Natural killer cell (primary cell): ENCODE measurements at regions of chr19 and their contacts with region 1.

Region 1: GRCh38 chr19:28633319-28634018 is 579.5 kb downstream of the UQCRFS1 start:
- DNase-seq: peak; percentile 70 to 74
- ATAC-seq: peak; percentile 94 to 97 (median 96)
- H3K4me3 ChIP-seq: no peak overlapping the region
- H3K4me3 Mint-ChIP-seq: peak overlapping the region; percentile 47
- H3K27ac ChIP-seq: peak overlapping the region; percentile 40
- H3K27ac Mint-ChIP-seq: peak overlapping the region; percentile 39 to 86
- H3K4me1 ChIP-seq: peaks cover 23% of the 10 kb centered on the region
- H3K4me1 Mint-ChIP-seq: peaks cover 27 to 39% of the 10 kb centered on the region in 2 donors
- H3K27me3 ChIP-seq: no peaks in the 10 kb centered on the region
- H3K27me3 Mint-ChIP-seq: peaks cover 0 to 5% of the 10 kb centered on the region in 2 donors
- CTCF ChIP-seq: peak; percentile 98

Region 2: DNA sequence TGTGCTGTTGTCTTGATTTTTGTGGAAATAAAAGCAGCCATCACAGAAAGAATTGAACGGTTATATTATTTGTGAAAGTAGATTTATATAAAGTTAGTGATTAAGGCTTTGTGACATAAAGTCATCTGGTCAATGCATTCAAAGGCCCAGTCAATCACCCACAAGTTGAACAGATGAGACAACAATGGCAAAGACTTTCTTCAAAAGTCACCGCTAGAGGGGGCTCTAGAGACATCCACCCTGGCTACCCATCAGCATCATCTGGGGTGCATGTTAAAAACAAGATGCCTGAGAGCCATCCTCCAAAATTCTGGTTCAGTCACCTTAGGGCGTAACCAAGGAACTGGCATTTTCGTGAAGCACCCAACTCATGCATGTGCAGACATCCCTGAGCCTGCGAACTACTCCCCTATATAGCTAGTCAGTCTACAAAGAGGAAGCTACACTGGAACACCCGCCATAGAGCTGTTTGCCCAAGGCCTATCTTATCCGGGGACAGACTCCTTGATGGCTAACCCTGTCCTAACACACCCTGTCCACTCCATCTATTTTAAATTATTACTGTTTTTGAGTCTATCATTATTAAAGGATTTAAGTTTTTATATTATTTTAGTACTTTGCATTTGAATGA is 391.1 kb before region 1 on chr19:
- intact Hi-C with region 1: loop called (anchors 2 kb)
- DNase-seq: peak in 1 of 2 donors; percentile 45
- ATAC-seq: peak in 2 of 3 donors; percentile 36 to 74
- H3K4me3 ChIP-seq: no peak overlapping the region
- H3K4me3 Mint-ChIP-seq: no peak overlapping the region
- H3K27ac ChIP-seq: no peak overlapping the region
- H3K27ac Mint-ChIP-seq: no peak overlapping the region
- H3K4me1 ChIP-seq: no peaks in the 10 kb centered on the region
- H3K4me1 Mint-ChIP-seq: no peaks in the 10 kb centered on the region
- H3K27me3 ChIP-seq: no peaks in the 10 kb centered on the region
- H3K27me3 Mint-ChIP-seq: peaks cover 12 to 13% of the 10 kb centered on the region in 2 donors
- CTCF ChIP-seq: peak; percentile 73

Region 3: GRCh38 chr19:28466107-28467045 is 167.1 kb before region 1 on chr19:
- intact Hi-C with region 1: loop called (anchors 1 kb)
- DNase-seq: peak; percentile 78 to 79
- ATAC-seq: peak; percentile 37 to 60 (median 58)
- H3K4me3 ChIP-seq: no peak overlapping the region
- H3K4me3 Mint-ChIP-seq: no peak overlapping the region
- H3K27ac ChIP-seq: no peak overlapping the region
- H3K27ac Mint-ChIP-seq: peak overlapping the region in 1 of 2 donors; percentile 50
- H3K4me1 ChIP-seq: peaks cover 47% of the 10 kb centered on the region
- H3K4me1 Mint-ChIP-seq: peaks cover 53 to 63% of the 10 kb centered on the region in 2 donors
- H3K27me3 ChIP-seq: no peaks in the 10 kb centered on the region
- H3K27me3 Mint-ChIP-seq: no peaks in the 10 kb centered on the region
- CTCF ChIP-seq: peak; percentile 89